Left ventricle myocardium inferior (tissue), 1 donor: ENCODE measurements at regions of chr12 and their contacts with region 1.

Region 1: DNA sequence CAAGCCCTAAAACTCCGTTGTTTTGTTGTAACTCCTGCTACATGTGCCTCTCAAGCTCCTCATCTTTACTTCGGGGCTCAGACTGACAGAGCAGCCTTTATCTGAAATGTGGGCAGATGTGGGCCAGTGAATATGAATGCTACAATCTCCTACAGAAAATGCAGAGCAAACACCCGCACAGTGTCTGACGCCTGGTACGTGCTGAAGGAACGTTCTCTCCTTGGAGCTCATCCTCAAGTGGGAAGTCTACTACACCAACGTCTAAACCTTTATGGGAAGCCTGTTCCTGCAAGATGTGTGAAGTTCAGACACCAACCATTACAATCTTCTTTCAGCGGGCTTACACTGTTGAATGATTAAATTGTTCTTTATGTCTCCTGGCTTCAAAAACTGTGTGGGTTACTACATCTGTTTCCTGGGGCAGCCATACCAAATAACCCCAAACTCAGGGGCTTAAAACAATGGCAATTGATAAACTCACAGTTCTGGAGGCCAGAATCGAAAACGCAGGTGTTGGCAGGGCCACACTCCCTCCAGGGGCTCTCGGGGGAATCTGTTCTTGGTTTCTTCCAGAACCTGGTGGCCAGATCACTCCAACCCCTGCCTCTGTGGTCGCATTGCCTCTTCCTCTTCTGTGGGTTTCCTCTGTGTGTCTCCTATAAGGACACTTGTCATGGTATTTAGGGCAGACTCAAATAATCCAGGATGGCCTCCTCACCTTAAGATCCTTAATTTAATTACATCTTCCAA is 179.7 kb upstream of the PLXNC1 start:
- DNase-seq: no peak
- H3K4me3 ChIP-seq: no peak overlapping the region
- H3K27ac ChIP-seq: no peak overlapping the region
- H3K4me1 ChIP-seq: peaks cover 12% of the 10 kb centered on the region
- H3K27me3 ChIP-seq: no peaks in the 10 kb centered on the region
- CTCF ChIP-seq: no peak

Region 2: GRCh38 chr12:93502802-93503623 is 465.7 kb before region 1 on chr12:
- intact Hi-C with region 1: loop called (anchors 10 kb)
- DNase-seq: no peak
- H3K4me3 ChIP-seq: no peak overlapping the region
- H3K27ac ChIP-seq: no peak overlapping the region
- H3K4me1 ChIP-seq: no peaks in the 10 kb centered on the region
- H3K27me3 ChIP-seq: no peaks in the 10 kb centered on the region
- CTCF ChIP-seq: peak; percentile 85

Region 3: GRCh38 chr12:93668919-93669418 is 299.7 kb before region 1 on chr12:
- intact Hi-C with region 1: no loop called
- DNase-seq: no peak
- H3K4me3 ChIP-seq: no peak overlapping the region
- H3K27ac ChIP-seq: no peak overlapping the region
- H3K4me1 ChIP-seq: peaks cover 5% of the 10 kb centered on the region
- H3K27me3 ChIP-seq: no peaks in the 10 kb centered on the region
- CTCF ChIP-seq: no peak

Region 4: DNA sequence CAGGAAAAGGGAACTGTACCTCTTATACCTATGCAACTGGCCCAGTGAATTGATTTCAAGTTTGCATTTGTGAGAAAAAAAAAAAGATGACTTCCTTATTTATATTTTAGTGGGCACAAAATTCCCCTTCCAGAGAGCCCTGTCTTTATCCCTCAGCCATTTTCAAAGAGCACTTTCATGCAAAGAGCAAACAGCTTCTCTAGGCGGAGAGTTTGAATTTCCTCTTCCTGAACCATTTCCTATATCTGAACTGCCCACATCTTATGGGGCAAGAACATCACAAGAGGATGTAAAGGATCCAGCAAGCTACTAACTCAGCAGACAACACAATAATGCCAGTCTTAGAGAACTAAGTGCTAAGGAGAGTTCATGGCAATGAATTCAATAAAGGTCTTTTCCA is 157.4 kb after region 1 on chr12:
- intact Hi-C with region 1: no loop called
- DNase-seq: no peak
- H3K4me3 ChIP-seq: no peak overlapping the region
- H3K27ac ChIP-seq: no peak overlapping the region
- H3K4me1 ChIP-seq: no peaks in the 10 kb centered on the region
- H3K27me3 ChIP-seq: peaks cover 29% of the 10 kb centered on the region
- CTCF ChIP-seq: no peak